Activated B cell treated with CpG ODN at 0.5 μM for 24 hours (primary cell): ENCODE measurements at regions of chr1 and their contacts with region 1.

Region 1: DNA sequence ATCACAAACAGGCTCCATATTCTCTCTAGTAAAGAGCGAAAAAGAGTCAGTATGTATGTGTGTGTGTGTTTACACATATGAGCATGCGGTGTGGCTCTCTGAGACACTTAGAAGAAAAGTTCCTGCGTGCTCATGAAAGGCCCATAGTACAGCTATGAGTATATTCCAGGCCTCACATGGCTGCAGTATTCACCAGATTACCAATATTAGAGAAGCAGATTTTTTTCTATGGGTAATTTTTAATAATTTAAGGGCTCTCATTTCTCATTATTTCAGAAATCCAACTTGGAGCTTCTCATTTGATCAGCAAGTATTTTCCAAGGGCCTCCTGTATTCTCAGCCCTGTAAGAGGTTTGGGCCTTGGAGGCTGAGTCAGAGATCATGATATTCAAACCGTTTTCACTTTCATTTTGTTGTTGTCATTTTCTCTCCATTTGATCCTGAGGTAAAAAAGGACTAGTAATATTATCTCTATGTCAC is 232.9 kb upstream of the SGIP1 start:
- DNase-seq: no peak
- ATAC-seq: peak; percentile 82
- H3K4me3 Mint-ChIP-seq: peak overlapping the region; percentile 79
- H3K27ac Mint-ChIP-seq: peak overlapping the region; percentile 72
- H3K4me1 Mint-ChIP-seq: peaks cover 22% of the 10 kb centered on the region
- H3K27me3 Mint-ChIP-seq: no peaks in the 10 kb centered on the region
- CTCF ChIP-seq: no peak

Region 2: GRCh38 chr1:66316464-66317247 is 15.6 kb after region 1 on chr1:
- CTCF ChIA-PET with region 1: no interaction called
- POLR2A ChIA-PET with region 1: interaction called, 4 read pairs
- intact Hi-C with region 1: loop called (anchors 2 kb)
- DNase-seq: no peak
- ATAC-seq: peak; percentile 42
- H3K4me3 Mint-ChIP-seq: no peak overlapping the region
- H3K27ac Mint-ChIP-seq: no peak overlapping the region
- H3K4me1 Mint-ChIP-seq: peaks cover 13% of the 10 kb centered on the region
- H3K27me3 Mint-ChIP-seq: no peaks in the 10 kb centered on the region
- CTCF ChIP-seq: no peak

Region 3: DNA sequence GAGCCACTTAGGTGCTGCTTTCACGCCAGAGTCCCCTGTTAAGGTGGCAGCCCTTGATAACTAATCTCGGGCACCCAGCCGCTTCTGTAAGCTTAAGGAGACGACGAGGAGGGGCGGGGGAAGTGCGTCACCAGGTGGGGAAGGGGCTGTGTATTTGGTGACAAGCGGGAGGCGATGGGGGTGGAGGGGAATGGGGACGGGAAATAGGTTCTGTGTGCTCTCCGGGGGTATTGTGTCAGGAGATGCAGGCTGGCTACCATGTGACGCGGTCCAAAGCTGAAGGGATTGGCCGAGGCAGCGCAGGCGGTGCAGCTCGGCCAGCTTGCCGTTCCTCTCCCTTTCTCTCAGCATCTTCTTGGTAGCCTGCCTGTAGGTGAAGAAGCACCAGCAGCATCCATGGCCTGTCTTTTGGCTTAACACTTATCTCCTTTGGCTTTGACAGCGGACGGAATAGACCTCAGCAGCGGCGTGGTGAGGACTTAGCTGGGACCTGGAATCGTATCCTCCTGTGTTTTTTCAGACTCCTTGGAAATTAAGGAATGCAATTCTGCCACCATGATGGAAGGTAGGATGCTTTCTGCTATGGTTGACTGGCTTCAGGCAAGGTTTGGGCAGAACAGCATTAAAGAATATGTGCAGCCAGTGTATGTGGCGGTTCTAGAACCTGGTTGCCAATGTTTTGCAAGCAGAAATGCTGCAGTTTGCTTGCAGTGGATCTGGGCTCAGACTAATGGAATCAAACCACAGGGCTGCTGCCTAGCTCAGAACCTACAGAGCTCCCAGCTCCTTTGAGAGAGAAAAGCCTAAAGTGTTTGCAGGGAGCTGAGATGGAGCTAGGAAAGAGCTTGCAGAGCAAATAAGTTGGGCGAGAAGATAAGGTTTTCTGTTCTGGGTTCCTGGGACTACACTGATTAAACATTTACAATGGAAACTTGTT is 233.1 kb after region 1 on chr1 and contains the start of gene SGIP1:
- CTCF ChIA-PET with region 1: no interaction called
- POLR2A ChIA-PET with region 1: no interaction called
- intact Hi-C with region 1: no loop called
- DNase-seq: no peak
- ATAC-seq: peak; percentile 34
- H3K4me3 Mint-ChIP-seq: peak within 1 kb of the TSS; percentile 77
- H3K27ac Mint-ChIP-seq: no peak within 1 kb of the TSS
- H3K4me1 Mint-ChIP-seq: peaks cover 24% of the 10 kb centered on the region
- H3K27me3 Mint-ChIP-seq: peaks cover 35% of the 10 kb centered on the region
- CTCF ChIP-seq: no peak
- total RNA-seq, gene SGIP1: not detected in 2 replicates